K562 (cell line): ENCODE measurements at regions of chr1 and their contacts with region 1.

Region 1: DNA sequence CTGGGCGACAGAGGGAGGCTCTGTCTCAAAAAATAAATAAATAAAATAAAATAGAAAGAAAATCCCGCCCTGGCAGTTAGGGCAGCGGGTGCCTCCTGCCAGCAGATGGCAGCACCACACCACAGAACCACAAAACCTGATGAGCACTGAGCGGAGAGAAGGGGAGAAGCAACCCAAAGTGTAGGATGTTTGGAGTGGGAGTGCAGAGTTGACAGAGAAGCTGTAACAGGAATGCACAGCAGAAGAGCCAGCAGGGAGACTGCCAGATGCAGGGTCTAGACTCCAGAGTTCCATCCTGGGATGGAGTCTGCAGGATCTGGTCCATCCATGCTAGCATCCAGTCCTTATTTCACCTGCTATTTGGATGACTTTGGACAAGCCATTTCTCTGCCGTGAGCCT is 29.7 kb upstream of the KIRREL1 start:
- DNase-seq: peak; percentile 64 to 73 (median 68)
- ATAC-seq: peak; percentile 95
- H3K4me3 ChIP-seq: no peak overlapping the region
- H3K27ac ChIP-seq: no peak overlapping the region
- H3K4me1 ChIP-seq: no peaks in the 10 kb centered on the region
- H3K27me3 ChIP-seq: peaks cover 0 to 13% of the 10 kb centered on the region in 2 experiments; a peak in 1 of 5 replicates
- CTCF ChIP-seq: peak; percentile 76 to 89 (median 81)
- EP300 ChIP-seq: no peak
- POLR2A ChIP-seq: no peak
- RAD21 ChIP-seq: peak; percentile 84 to 86

Region 2: GRCh38 chr1:157984469-157984868 is 20.8 kb after region 1 on chr1:
- CTCF ChIA-PET with region 1: no interaction called
- POLR2A ChIA-PET with region 1: no interaction called
- in situ Hi-C with region 1: no loop called
- intact Hi-C with region 1: no loop called
- DNase-seq: no peak
- ATAC-seq: no peak
- H3K4me3 ChIP-seq: no peak overlapping the region
- H3K27ac ChIP-seq: no peak overlapping the region
- H3K4me1 ChIP-seq: no peaks in the 10 kb centered on the region
- H3K27me3 ChIP-seq: peaks cover 0 to 7% of the 10 kb centered on the region in 2 experiments; a peak in 1 of 5 replicates
- CTCF ChIP-seq: no peak
- EP300 ChIP-seq: no peak
- POLR2A ChIP-seq: no peak
- RAD21 ChIP-seq: no peak

Region 3: GRCh38 chr1:158087320-158087927 is 123.7 kb after region 1 on chr1:
- CTCF ChIA-PET with region 1: interaction called, 3 read pairs
- POLR2A ChIA-PET with region 1: no interaction called
- in situ Hi-C with region 1: no loop called
- intact Hi-C with region 1: loop called (anchors 2 kb)
- DNase-seq: peak; percentile 79 to 89 (median 84)
- ATAC-seq: peak; percentile 99
- H3K4me3 ChIP-seq: no peak overlapping the region
- H3K27ac ChIP-seq: no peak overlapping the region
- H3K4me1 ChIP-seq: no peaks in the 10 kb centered on the region
- H3K27me3 ChIP-seq: peaks cover 13 to 31% of the 10 kb centered on the region in 2 experiments; a peak in 3 of 5 replicates
- CTCF ChIP-seq: peak; percentile 96 to 98 (median 98)
- EP300 ChIP-seq: no peak
- POLR2A ChIP-seq: no peak
- RAD21 ChIP-seq: peak; percentile 70 to 87

Region 4: GRCh38 chr1:158666037-158666436 is 702.3 kb after region 1 on chr1:
- CTCF ChIA-PET with region 1: no interaction called
- POLR2A ChIA-PET with region 1: no interaction called
- in situ Hi-C with region 1: no loop called
- intact Hi-C with region 1: no loop called
- DNase-seq: no peak
- ATAC-seq: no peak
- H3K4me3 ChIP-seq: no peak overlapping the region
- H3K27ac ChIP-seq: no peak overlapping the region
- H3K4me1 ChIP-seq: no peaks in the 10 kb centered on the region
- H3K27me3 ChIP-seq: no peaks in the 10 kb centered on the region
- CTCF ChIP-seq: no peak
- EP300 ChIP-seq: no peak
- POLR2A ChIP-seq: no peak
- RAD21 ChIP-seq: no peak